ENCODE measurements at regions of chr20 and their contacts with region 1.

Region 1: GRCh38 chr20:45322952-45323383 is 14.9 kb upstream of the MATN4 start:
- DNase-seq: no peak
- H3K4me3 ChIP-seq: no peak overlapping the region
- H3K27ac ChIP-seq: no peak overlapping the region
- H3K4me1 ChIP-seq: no peaks in the 10 kb centered on the region
- H3K27me3 ChIP-seq: no peaks in the 10 kb centered on the region
- CTCF ChIP-seq: no peak
- EP300 ChIP-seq: no peak
- POLR2A ChIP-seq: no peak

Region 2: DNA sequence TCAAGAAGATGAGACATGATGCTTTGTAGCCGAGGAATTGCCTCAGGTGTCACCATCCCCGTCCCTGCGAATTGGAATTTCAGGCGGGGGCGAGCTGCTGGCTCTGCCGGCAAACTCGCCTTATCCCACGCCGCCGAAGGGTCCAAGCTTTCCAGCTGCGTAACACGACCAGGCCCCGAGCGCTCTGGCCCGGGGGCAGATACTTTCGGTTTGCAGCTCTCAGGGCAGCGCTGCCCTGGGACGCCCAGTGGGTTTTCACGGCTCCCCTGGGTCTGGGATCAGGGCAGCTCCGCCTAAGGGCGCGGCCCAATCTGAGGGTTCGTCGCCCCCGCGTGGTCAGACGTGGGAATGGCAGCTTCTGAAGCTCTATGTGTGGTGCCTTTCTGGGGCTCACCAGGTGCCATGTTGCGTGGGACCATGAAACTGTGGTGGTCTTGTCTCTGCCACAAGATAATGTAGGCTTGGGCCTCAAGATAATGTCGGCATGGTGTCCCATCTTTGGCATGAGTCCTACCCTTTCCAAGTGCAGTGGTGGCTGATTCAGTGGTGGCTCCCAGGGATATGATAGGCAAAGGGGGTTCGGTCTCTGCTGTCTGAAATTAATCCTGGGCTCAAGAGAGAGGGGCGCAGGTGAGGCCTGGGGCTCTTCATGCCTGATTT is 113.9 kb after region 1 on chr20:
- intact Hi-C with region 1: loop called (anchors 2 to 10 kb)
- DNase-seq: peak; percentile 84 to 92 (median 89)
- H3K4me3 ChIP-seq: peak overlapping the region; percentile 44
- H3K27ac ChIP-seq: peak overlapping the region; percentile 65 to 70
- H3K4me1 ChIP-seq: peaks cover 2% of the 10 kb centered on the region
- H3K27me3 ChIP-seq: no peaks in the 10 kb centered on the region
- CTCF ChIP-seq: peak; percentile 90 to 94 (median 91)
- EP300 ChIP-seq: no peak
- POLR2A ChIP-seq: peak; percentile 29

Region 3: DNA sequence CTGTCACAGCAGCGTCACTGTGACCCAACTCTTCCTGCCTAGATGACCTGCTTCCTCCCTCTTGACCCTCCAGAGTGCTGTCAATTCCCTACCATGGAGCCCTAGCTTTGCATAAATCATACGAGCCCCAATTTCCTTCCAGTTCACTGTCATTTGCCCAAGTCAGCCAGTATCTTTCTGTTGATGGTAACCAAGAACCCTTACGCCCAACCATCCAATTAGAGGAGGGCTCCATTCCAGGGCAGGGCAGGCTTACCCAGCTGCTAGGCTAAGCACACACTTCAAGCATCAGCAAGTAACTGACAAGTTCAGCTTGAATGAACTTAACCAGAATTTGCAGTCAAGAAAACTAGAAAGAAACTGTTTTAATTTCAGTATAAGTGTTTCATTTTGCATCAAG is 443.0 kb after region 1 on chr20:
- intact Hi-C with region 1: loop called (anchors 5 to 10 kb)
- DNase-seq: no peak
- H3K4me3 ChIP-seq: no peak overlapping the region
- H3K27ac ChIP-seq: no peak overlapping the region
- H3K4me1 ChIP-seq: no peaks in the 10 kb centered on the region
- H3K27me3 ChIP-seq: no peaks in the 10 kb centered on the region
- CTCF ChIP-seq: no peak
- EP300 ChIP-seq: no peak
- POLR2A ChIP-seq: no peak

Region 4: GRCh38 chr20:45771182-45771759 is 448.3 kb after region 1 on chr20:
- intact Hi-C with region 1: loop called (anchors 5 to 10 kb)
- DNase-seq: peak; percentile 65 to 84 (median 78)
- H3K4me3 ChIP-seq: no peak overlapping the region
- H3K27ac ChIP-seq: no peak overlapping the region
- H3K4me1 ChIP-seq: peaks cover 3% of the 10 kb centered on the region
- H3K27me3 ChIP-seq: no peaks in the 10 kb centered on the region
- CTCF ChIP-seq: peak; percentile 83 to 91 (median 89)
- EP300 ChIP-seq: no peak
- POLR2A ChIP-seq: no peak

Measured in ovary (tissue), 10 donors.